ENCODE measurements at regions of chr1 and their contacts with region 1.

Region 1: GRCh38 chr1:236142253-236143103 is at the start of gene GPR137B:
- DNase-seq: no peak
- ATAC-seq: peak; percentile 78
- H3K4me3 ChIP-seq: peak within 1 kb of the TSS; percentile 64 to 67
- H3K27ac ChIP-seq: peak within 1 kb of the TSS; percentile 36; the same call in 1 of the 2 replicates
- H3K4me1 ChIP-seq: peaks cover 11 to 22% of the 10 kb centered on the region in 2 experiments
- H3K27me3 ChIP-seq: 0 out of 2 replicates have a peak, but pooled peaks cover 11% of the 10 kb centered on the region
- CTCF ChIP-seq: no peak
- POLR2A ChIP-seq: no peak
- RAD21 ChIP-seq: no peak
- total RNA-seq, gene GPR137B: 11.4 TPM

Region 2: DNA sequence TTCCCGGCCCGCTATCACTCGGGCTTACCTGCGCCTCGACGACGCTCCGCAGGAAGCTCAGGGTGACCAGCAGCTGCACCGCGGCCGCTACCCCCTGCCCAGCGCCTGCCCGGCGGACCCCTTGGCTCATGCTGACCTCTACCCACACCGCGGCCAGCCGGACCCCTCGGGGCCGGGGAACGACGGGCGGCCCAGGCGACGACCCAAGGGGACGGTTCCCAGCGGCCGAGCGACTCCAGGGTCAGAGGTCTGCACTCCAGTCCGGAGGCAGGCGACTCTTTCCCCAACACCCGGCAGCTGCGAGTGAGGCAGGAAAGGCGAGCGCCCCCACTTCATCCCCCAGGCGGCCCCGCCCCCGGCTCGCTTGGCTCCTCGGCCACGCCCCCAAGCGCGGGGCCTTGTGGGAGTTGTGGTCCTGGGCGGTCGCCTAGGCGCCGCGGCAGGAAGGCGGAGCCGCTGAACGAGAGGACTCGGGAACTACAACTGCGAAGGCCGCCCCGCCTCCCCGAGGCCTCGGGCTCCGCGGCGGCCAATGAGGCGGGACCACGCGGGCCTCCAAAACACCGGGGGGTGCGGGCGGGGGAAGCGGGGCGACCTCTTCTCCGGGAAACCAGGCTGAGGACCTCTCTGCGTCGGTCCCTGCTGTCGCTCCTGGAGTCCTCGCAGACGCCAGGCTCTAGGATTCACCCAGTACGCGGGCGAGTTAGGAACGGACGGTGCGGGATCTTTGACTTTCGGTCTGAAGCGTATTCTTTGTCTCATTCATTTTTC is 139.4 kb after region 1 on chr1 and contains the start of gene ERO1B:
- CTCF ChIA-PET with region 1: no interaction called
- POLR2A ChIA-PET with region 1: no interaction called
- RAD21 ChIA-PET with region 1: no interaction called
- intact Hi-C with region 1: loop called (anchors 10 kb)
- DNase-seq: peak; percentile 88
- ATAC-seq: peak; percentile 96
- H3K4me3 ChIP-seq: peak within 1 kb of the TSS; percentile 71 to 76
- H3K27ac ChIP-seq: peak within 1 kb of the TSS; percentile 55; the same call in 1 of the 2 replicates
- H3K4me1 ChIP-seq: peaks cover 3 to 15% of the 10 kb centered on the region in 2 experiments; a peak in 2 of 4 replicates
- H3K27me3 ChIP-seq: no peaks in the 10 kb centered on the region
- CTCF ChIP-seq: no peak
- POLR2A ChIP-seq: peak; percentile 40
- RAD21 ChIP-seq: no peak
- total RNA-seq, gene ERO1B: 5.4 TPM